ENCODE measurements at regions of chr19 and their contacts with region 1.

Region 1: GRCh38 chr19:5048091-5048726 is 79.3 kb downstream of the KDM4B start:
- DNase-seq: no peak
- H3K4me3 ChIP-seq: no peak overlapping the region
- H3K27me3 ChIP-seq: no peaks in the 10 kb centered on the region
- CTCF ChIP-seq: peak; percentile 100

Region 2: GRCh38 chr19:4968462-4969291 is 79.5 kb before region 1 on chr19 and contains the start of gene KDM4B:
- CTCF ChIA-PET with region 1: no interaction called
- POLR2A ChIA-PET with region 1: no interaction called
- DNase-seq: peak; percentile 97
- H3K4me3 ChIP-seq: peak within 1 kb of the TSS; percentile 83
- H3K27me3 ChIP-seq: no peaks in the 10 kb centered on the region
- CTCF ChIP-seq: no peak
- polyA plus RNA-seq, gene KDM4B: 10.5 and 15.2 TPM in 2 replicates

Region 3: DNA sequence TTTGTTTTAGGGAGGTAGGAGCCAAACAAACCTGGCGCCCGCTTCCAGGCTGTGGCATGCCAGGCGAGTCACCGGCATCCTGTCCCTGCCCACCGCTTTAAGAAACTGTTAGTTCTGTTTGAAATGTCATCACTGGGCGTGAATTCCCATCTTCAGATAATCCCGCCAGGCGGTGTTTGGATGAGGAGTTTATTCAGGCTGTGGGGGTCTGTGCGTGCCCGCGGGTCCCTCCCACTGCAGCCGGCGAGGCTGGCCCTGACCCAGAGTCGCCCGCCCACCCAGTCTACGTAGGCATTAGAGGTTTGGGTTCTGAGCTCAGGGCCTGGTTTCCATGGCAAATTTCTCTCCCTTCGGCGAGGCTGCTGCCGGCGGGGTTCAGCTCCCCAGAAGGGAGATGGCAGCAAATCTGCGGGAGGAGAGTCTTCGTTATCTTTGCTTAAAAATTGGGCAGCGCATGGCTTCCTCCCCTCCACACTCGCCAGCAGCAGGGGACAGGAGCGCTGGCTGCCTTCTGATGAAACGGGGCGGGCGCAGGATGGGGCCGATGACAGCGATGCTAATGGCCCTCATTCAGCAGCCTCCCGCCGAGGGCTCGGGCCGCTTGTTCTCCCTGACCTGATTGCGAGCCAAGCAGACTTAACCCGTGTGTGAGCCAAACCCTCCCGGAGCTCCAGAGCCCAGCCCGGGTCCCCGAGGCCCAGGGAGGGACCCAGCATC is 10.8 kb after region 1 on chr19:
- CTCF ChIA-PET with region 1: interaction called, 17 read pairs
- POLR2A ChIA-PET with region 1: no interaction called
- DNase-seq: no peak
- H3K4me3 ChIP-seq: no peak overlapping the region
- H3K27me3 ChIP-seq: no peaks in the 10 kb centered on the region
- CTCF ChIP-seq: no peak

Region 4: GRCh38 chr19:5436106-5436947 is 388.1 kb after region 1 on chr19:
- CTCF ChIA-PET with region 1: no interaction called
- POLR2A ChIA-PET with region 1: interaction called, 16 read pairs
- DNase-seq: peak; percentile 2
- H3K4me3 ChIP-seq: peak overlapping the region; percentile 40
- H3K27me3 ChIP-seq: no peaks in the 10 kb centered on the region
- CTCF ChIP-seq: no peak

Region 5: GRCh38 chr19:5578494-5578846 is 530.3 kb after region 1 on chr19:
- CTCF ChIA-PET with region 1: interaction called, 11 read pairs
- POLR2A ChIA-PET with region 1: no interaction called
- DNase-seq: no peak
- H3K4me3 ChIP-seq: no peak overlapping the region
- H3K27me3 ChIP-seq: no peaks in the 10 kb centered on the region
- CTCF ChIP-seq: no peak

Measured in BJ (cell line).